Transverse colon (tissue), 4 donors: ENCODE measurements at regions of chr1 and their contacts with region 1.

Region 1: GRCh38 chr1:228794173-228794572 is 58.9 kb downstream of the RHOU start:
- DNase-seq: no peak
- H3K4me3 ChIP-seq: no peak overlapping the region
- H3K27ac ChIP-seq: no peak overlapping the region
- H3K4me1 ChIP-seq: peaks cover 0 to 4% (median 0%) of the 10 kb centered on the region in 4 donors
- H3K27me3 ChIP-seq: no peaks in the 10 kb centered on the region
- CTCF ChIP-seq: no peak
- EP300 ChIP-seq: no peak
- POLR2A ChIP-seq: no peak

Region 2: DNA sequence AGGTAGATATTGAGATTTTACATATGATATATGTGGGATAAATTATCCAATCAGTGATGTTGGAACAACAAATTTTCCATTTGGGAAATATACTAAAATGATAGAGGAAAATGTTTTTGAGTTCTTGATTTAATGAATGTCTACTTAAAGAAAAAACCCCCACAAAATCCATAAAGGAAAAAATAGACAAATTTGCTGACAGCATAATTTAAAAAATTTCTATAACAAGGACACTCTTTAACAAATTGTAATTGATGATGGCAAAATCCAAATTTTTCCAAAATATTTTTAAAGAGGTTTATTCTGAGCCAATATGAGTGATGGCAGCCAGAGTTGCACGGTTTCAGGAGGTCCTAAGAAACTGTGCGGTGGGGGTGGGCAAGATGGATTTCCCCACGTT is 110.7 kb before region 1 on chr1:
- in situ Hi-C with region 1: no loop called
- intact Hi-C with region 1: no loop called
- DNase-seq: no peak
- H3K4me3 ChIP-seq: no peak overlapping the region
- H3K27ac ChIP-seq: no peak overlapping the region
- H3K4me1 ChIP-seq: no peaks in the 10 kb centered on the region
- H3K27me3 ChIP-seq: peaks cover 14% of the 10 kb centered on the region
- CTCF ChIP-seq: no peak
- EP300 ChIP-seq: no peak
- POLR2A ChIP-seq: no peak

Region 3: DNA sequence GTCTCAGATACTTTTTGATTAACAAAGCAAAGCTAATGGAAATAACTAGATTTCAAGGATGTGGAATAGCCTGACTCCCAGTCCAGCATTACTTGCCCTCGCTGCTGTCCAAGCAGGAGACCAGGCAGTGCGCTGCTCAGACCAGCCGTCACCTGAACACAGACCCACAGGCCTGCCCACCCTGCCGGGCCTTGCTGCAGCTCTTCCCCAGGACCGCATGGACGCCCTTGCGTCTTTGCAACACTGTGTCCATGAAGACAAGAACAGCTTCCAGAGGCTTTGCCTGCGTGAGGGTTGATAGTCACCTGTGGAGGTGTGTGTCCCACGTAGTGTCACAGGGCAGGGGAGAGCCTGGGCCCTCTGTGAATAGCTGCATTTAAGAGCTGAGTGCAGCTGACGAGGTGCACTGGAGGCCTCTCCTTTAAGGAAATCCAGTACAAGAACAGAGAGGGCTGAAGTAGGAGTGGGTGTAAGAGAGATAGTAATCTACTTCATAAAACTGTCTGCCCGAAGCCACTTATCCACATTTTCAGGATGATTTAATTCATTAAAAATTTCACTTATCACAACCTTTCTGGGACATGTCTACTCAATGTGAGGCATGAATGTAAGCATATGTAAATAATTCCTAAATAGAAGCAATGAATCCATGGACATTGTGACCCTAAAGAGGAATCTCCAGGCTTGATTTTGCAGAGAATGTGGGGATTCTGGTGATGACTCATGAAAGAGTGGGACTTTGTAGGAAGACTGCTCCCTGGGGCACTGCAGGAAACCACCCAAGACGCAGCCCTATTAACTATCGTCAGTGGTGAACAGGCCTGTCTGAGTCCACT is 300.5 kb after region 1 on chr1:
- in situ Hi-C with region 1: no loop called
- intact Hi-C with region 1: no loop called
- DNase-seq: no peak
- H3K4me3 ChIP-seq: no peak overlapping the region
- H3K27ac ChIP-seq: no peak overlapping the region
- H3K4me1 ChIP-seq: peaks cover 0 to 18% (median 10%) of the 10 kb centered on the region in 4 donors
- H3K27me3 ChIP-seq: no peaks in the 10 kb centered on the region
- CTCF ChIP-seq: no peak
- EP300 ChIP-seq: no peak
- POLR2A ChIP-seq: no peak

Region 4: GRCh38 chr1:229117664-229118300 is 323.6 kb after region 1 on chr1:
- in situ Hi-C with region 1: no loop called
- intact Hi-C with region 1: loop called (anchors 10 kb)
- DNase-seq: peak; percentile 65
- H3K4me3 ChIP-seq: no peak overlapping the region
- H3K27ac ChIP-seq: peak overlapping the region; percentile 21 to 82 (median 68)
- H3K4me1 ChIP-seq: peaks cover 4 to 22% (median 7%) of the 10 kb centered on the region in 4 donors
- H3K27me3 ChIP-seq: no peaks in the 10 kb centered on the region
- CTCF ChIP-seq: no peak
- EP300 ChIP-seq: peak; percentile 54
- POLR2A ChIP-seq: no peak